K562 (cell line): ENCODE measurements at regions of chr12 and their contacts with region 1.

Region 1: DNA sequence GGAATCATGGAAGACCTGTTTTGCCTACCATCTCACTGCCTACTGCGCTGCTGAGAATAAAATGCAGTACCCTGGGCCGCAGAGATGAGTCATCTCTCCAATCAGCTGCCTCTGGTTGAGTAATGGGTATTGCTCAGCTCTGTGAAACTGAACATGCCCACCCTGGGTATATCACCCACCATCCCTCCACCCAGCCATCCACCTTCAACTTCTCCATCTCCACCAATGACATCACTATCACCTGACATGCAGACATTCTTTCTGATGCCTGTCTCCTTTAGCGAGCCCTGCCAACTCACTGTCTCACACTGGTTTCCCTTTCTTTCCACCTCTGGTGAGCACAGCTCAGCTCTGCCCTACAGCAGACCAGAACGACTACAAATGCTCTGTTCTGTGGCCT is 33.6 kb downstream of the E2F7 start:
- DNase-seq: no peak
- ATAC-seq: no peak
- H3K4me3 ChIP-seq: no peak overlapping the region
- H3K27ac ChIP-seq: no peak overlapping the region
- H3K4me1 ChIP-seq: no peaks in the 10 kb centered on the region
- H3K27me3 ChIP-seq: no peaks in the 10 kb centered on the region
- CTCF ChIP-seq: no peak
- EP300 ChIP-seq: no peak
- POLR2A ChIP-seq: no peak
- RAD21 ChIP-seq: no peak

Region 2: GRCh38 chr12:77019920-77020319 is 11.8 kb before region 1 on chr12:
- CTCF ChIA-PET with region 1: no interaction called
- POLR2A ChIA-PET with region 1: interaction called, 10 read pairs
- in situ Hi-C with region 1: no loop called
- intact Hi-C with region 1: no loop called
- DNase-seq: no peak
- ATAC-seq: no peak
- H3K4me3 ChIP-seq: no peak overlapping the region
- H3K27ac ChIP-seq: no peak overlapping the region
- H3K4me1 ChIP-seq: no peaks in the 10 kb centered on the region
- H3K27me3 ChIP-seq: no peaks in the 10 kb centered on the region
- CTCF ChIP-seq: no peak
- EP300 ChIP-seq: no peak
- POLR2A ChIP-seq: no peak
- RAD21 ChIP-seq: no peak

Region 3: DNA sequence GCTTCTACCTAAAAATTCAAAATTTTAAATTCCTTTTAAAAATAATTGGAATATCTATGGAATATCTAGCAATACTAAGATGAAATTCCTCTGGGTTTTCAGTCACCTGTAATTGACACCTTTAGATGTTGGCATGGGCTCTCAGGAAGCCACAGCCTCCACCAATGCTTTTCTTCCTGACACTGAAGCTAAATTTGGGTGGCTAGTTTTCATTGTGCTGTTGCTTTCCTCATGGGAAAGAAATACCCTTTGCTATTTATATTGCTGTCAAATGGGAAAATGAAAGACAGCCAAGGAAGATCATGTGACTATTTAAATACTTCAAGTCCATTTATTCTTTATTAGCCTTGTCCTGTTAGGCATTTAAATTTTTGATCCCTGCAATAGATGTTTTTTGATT is 1112.0 kb after region 1 on chr12:
- CTCF ChIA-PET with region 1: no interaction called
- POLR2A ChIA-PET with region 1: no interaction called
- in situ Hi-C with region 1: no loop called
- intact Hi-C with region 1: no loop called
- DNase-seq: no peak
- ATAC-seq: no peak
- H3K4me3 ChIP-seq: no peak overlapping the region
- H3K27ac ChIP-seq: no peak overlapping the region
- H3K4me1 ChIP-seq: no peaks in the 10 kb centered on the region
- H3K27me3 ChIP-seq: no peaks in the 10 kb centered on the region
- CTCF ChIP-seq: no peak
- EP300 ChIP-seq: no peak
- POLR2A ChIP-seq: no peak
- RAD21 ChIP-seq: no peak